ENCODE measurements at regions of chr6 and their contacts with region 1.

Region 1: DNA sequence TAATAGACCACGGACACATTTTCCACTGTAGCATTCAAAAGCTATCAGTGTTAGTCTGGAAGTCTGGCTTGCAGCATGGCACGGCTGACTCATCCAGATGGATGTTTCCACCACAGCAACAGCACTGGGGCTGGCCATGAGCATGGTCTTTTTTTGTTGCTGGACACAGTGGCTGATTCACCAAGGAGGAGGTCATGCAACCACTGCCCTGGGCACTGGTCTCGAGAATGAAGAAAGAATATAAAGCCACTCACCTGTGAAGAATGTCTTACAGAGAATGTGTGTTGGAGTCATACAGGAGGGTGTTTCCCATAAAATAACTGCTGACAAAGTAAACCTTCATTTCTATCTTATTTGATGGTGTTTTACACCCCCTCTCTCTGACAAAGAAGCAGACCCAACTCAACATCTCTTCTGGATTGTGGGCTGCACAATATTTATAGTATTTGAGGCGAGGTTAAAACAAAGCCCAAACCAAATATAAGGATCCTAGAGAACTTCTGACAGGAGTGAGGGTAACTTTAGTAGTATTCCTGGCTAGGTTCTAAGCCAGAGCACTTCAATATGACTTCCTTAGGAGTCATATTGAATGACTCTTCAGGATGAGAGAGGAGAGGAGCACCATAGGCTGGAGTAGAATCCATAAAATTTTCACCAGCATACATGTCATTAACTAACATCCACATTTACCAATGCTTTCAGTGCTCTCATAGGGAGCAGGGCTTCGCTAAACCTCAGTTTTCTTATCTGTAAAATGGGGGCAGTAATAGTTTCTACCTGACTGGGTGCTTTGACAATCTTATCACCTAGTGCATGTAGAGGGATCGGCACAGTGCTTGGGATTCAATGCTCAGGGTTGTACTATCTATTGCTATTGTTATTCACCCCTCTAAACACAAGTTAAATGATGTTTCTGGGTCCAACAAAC is 121.4 kb downstream of the KIF13A start:
- DNase-seq: peak; percentile 86 to 96
- H3K4me3 ChIP-seq: no peak overlapping the region
- H3K27ac ChIP-seq: peak overlapping the region; percentile 78 to 92
- H3K4me1 ChIP-seq: peaks cover 16 to 40% of the 10 kb centered on the region in 2 donors
- H3K27me3 ChIP-seq: no peaks in the 10 kb centered on the region
- CTCF ChIP-seq: no peak

Region 2: GRCh38 chr6:17907406-17908229 is 41.6 kb after region 1 on chr6:
- intact Hi-C with region 1: loop called (anchors 5 kb)
- DNase-seq: peak; percentile 43 to 91
- H3K4me3 ChIP-seq: peak overlapping the region in 1 of 2 donors; percentile 7
- H3K27ac ChIP-seq: peak overlapping the region; percentile 10 to 54
- H3K4me1 ChIP-seq: peaks cover 2 to 34% of the 10 kb centered on the region in 2 donors
- H3K27me3 ChIP-seq: no peaks in the 10 kb centered on the region
- CTCF ChIP-seq: no peak

Region 3: DNA sequence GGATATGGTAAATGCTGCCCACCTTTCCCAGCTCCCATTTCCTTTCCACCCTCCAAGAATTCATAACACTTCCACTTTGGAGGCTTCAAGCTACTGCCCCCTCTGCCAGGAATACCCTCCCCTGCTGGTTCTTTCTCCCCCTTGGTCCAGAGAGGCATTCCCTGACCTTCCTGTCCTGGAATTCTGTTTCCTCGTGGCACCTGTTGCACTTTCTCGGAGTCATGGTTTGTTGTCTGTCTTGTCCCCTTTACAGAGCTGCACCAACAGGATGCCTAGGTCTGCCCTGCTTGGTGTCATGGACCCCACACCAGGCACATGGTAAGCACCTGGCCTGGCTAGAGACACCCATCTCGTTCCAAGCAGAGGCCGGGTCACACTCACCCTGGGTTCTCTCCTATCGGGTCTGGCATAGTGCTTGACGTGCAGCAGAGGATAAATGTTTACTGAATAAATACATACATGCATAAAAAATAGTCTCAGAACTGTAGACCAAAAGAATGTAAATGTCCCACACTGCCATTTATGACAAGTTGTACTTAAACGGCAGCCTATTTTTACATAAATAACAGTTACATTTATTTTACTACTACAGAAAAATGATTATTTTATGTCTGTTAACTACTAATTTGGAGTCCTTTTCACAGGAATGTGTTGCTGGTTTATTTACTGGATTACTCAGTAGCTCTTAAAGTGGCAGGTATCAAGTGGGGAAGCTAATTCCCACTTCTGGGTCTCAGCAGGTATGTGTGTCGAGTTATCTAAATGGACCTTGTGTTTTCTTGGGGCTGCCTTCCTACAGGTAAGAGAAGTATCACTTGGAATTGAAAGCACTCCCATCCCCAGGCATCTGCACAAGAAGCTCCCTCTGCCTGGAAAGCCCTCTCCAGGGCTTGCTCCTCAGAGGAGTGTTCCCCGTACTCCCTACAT is 52.0 kb after region 1 on chr6:
- intact Hi-C with region 1: no loop called
- DNase-seq: no peak
- H3K4me3 ChIP-seq: no peak overlapping the region
- H3K27ac ChIP-seq: no peak overlapping the region
- H3K4me1 ChIP-seq: peaks cover 0 to 29% of the 10 kb centered on the region in 2 donors
- H3K27me3 ChIP-seq: no peaks in the 10 kb centered on the region
- CTCF ChIP-seq: no peak

Region 4: GRCh38 chr6:17967668-17968518 is 101.8 kb after region 1 on chr6:
- intact Hi-C with region 1: loop called (anchors 2 kb)
- DNase-seq: no peak
- H3K4me3 ChIP-seq: no peak overlapping the region
- H3K27ac ChIP-seq: peak overlapping the region; percentile 84 to 89
- H3K4me1 ChIP-seq: peaks cover 17 to 67% of the 10 kb centered on the region in 2 donors
- H3K27me3 ChIP-seq: no peaks in the 10 kb centered on the region
- CTCF ChIP-seq: no peak

Region 5: GRCh38 chr6:17987576-17988421 is 121.7 kb after region 1 on chr6 and contains the start of gene KIF13A:
- intact Hi-C with region 1: loop called (anchors 2 kb)
- DNase-seq: peak in 1 of 2 donors; percentile 86
- H3K4me3 ChIP-seq: peak within 1 kb of the TSS; percentile 81 to 84
- H3K27ac ChIP-seq: peak within 1 kb of the TSS; percentile 92 to 93
- H3K4me1 ChIP-seq: peaks cover 0 to 18% of the 10 kb centered on the region in 2 donors
- H3K27me3 ChIP-seq: no peaks in the 10 kb centered on the region
- CTCF ChIP-seq: peak in 2 of 3 experiments; percentile 20 to 42
- total RNA-seq, gene KIF13A: 28.9 TPM

Measured in ascending aorta (tissue), 2 donors.